ENCODE measurements at regions of chr20 and their contacts with region 1.

Region 1: GRCh38 chr20:46089417-46090388 is at the start of gene NCOA5:
- DNase-seq: peak; percentile 90 to 94 (median 92)
- H3K4me3 ChIP-seq: peak within 1 kb of the TSS; percentile 51 to 88 (median 75)
- H3K4me3 Mint-ChIP-seq: peak within 1 kb of the TSS; percentile 85 to 94
- H3K27ac ChIP-seq: peak within 1 kb of the TSS; percentile 58 to 92
- H3K27ac Mint-ChIP-seq: peak within 1 kb of the TSS; percentile 85 to 97 (median 93)
- H3K4me1 ChIP-seq: peaks cover 25 to 46% of the 10 kb centered on the region in 2 donors
- H3K4me1 Mint-ChIP-seq: peaks cover 44% of the 10 kb centered on the region
- H3K27me3 ChIP-seq: no peaks in the 10 kb centered on the region
- H3K27me3 Mint-ChIP-seq: no peaks in the 10 kb centered on the region
- CTCF ChIP-seq: no peak
- polyA plus RNA-seq, gene NCOA5: 4.5 to 10.2 (median 6.0) TPM

Region 2: GRCh38 chr20:45798935-45799642 is 290.6 kb before region 1 on chr20:
- intact Hi-C with region 1: loop called in 1 of 2 experiments (anchors 10 kb)
- DNase-seq: peak; percentile 24 to 60 (median 53)
- H3K4me3 ChIP-seq: no peak overlapping the region
- H3K4me3 Mint-ChIP-seq: no peak overlapping the region
- H3K27ac ChIP-seq: peak overlapping the region in 1 of 2 donors; percentile 50
- H3K27ac Mint-ChIP-seq: peak overlapping the region in 5 of 7 donors; percentile 21 to 78 (median 62)
- H3K4me1 ChIP-seq: no peaks in the 10 kb centered on the region
- H3K4me1 Mint-ChIP-seq: peaks cover 12% of the 10 kb centered on the region
- H3K27me3 ChIP-seq: no peaks in the 10 kb centered on the region
- H3K27me3 Mint-ChIP-seq: peaks cover 0 to 2% (median 0%) of the 10 kb centered on the region in 3 donors
- CTCF ChIP-seq: peak; percentile 79

Region 3: GRCh38 chr20:45959956-45960630 is 129.6 kb before region 1 on chr20:
- intact Hi-C with region 1: no loop called
- DNase-seq: peak in 1 of 3 donors; percentile 1
- H3K4me3 ChIP-seq: no peak overlapping the region
- H3K4me3 Mint-ChIP-seq: no peak overlapping the region
- H3K27ac ChIP-seq: no peak overlapping the region
- H3K27ac Mint-ChIP-seq: peak overlapping the region in 1 of 7 donors; percentile 82
- H3K4me1 ChIP-seq: no peaks in the 10 kb centered on the region
- H3K4me1 Mint-ChIP-seq: no peaks in the 10 kb centered on the region
- H3K27me3 ChIP-seq: no peaks in the 10 kb centered on the region
- H3K27me3 Mint-ChIP-seq: peaks cover 0 to 2% (median 0%) of the 10 kb centered on the region in 3 donors
- CTCF ChIP-seq: no peak

Region 4: GRCh38 chr20:45971675-45972499 is 117.8 kb before region 1 on chr20 and contains the start of gene ZNF335:
- intact Hi-C with region 1: loop called in 1 of 2 experiments (anchors 5 kb)
- DNase-seq: peak; percentile 86 to 98 (median 94)
- H3K4me3 ChIP-seq: peak within 1 kb of the TSS; percentile 90 to 96 (median 96)
- H3K4me3 Mint-ChIP-seq: peak within 1 kb of the TSS; percentile 83 to 88
- H3K27ac ChIP-seq: peak within 1 kb of the TSS; percentile 97 to 99
- H3K27ac Mint-ChIP-seq: peak within 1 kb of the TSS; percentile 90 to 100 (median 100)
- H3K4me1 ChIP-seq: peaks cover 45 to 47% of the 10 kb centered on the region in 2 donors
- H3K4me1 Mint-ChIP-seq: peaks cover 37% of the 10 kb centered on the region
- H3K27me3 ChIP-seq: no peaks in the 10 kb centered on the region
- H3K27me3 Mint-ChIP-seq: peaks cover 0 to 2% (median 0%) of the 10 kb centered on the region in 3 donors
- CTCF ChIP-seq: peak; percentile 22
- polyA plus RNA-seq, gene ZNF335: 2.7 to 39.6 (median 3.1) TPM

Region 5: DNA sequence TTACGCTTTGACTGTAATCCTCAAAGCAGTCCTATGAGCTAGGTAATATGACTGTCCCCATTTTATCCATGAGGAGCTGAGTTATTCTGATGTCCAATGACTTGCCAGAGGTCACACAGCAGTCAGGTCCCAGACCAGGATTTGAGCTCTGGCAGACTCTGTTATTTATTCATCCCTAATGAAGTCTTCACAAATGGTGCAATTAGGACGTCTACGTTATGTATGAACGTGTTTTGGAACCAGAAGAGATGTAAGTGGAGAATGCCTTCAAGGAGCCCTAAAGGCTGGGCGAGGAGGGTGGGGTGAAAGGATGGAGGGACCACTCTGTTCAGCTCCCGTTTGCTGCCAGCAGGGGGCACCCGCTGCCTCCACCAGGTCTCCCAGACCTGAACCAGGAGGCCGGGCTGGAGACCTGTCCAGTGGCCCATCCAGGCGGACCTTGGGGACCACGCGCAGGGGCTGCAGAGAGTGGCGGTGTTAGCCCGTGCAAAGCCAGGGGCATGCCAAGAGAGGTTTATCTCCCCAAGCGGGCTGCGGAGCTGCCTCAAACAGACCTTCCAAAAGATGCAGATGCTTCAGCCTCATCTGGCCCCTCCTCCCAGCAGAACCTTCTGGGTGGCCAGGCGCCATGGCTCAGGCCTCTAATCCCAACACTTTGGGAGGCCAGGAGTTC is 102.5 kb before region 1 on chr20:
- intact Hi-C with region 1: loop called in 1 of 2 experiments (anchors 10 kb)
- DNase-seq: peak; percentile 76 to 82 (median 81)
- H3K4me3 ChIP-seq: no peak overlapping the region
- H3K4me3 Mint-ChIP-seq: no peak overlapping the region
- H3K27ac ChIP-seq: no peak overlapping the region
- H3K27ac Mint-ChIP-seq: peak overlapping the region in 1 of 7 donors; percentile 31
- H3K4me1 ChIP-seq: peaks cover 10 to 11% of the 10 kb centered on the region in 2 donors
- H3K4me1 Mint-ChIP-seq: peaks cover 9% of the 10 kb centered on the region
- H3K27me3 ChIP-seq: peaks cover 7 to 34% of the 10 kb centered on the region in 2 donors
- H3K27me3 Mint-ChIP-seq: peaks cover 31 to 54% (median 35%) of the 10 kb centered on the region in 3 donors
- CTCF ChIP-seq: peak; percentile 96